ENCODE measurements at regions of chr14 and their contacts with region 1.

Region 1: DNA sequence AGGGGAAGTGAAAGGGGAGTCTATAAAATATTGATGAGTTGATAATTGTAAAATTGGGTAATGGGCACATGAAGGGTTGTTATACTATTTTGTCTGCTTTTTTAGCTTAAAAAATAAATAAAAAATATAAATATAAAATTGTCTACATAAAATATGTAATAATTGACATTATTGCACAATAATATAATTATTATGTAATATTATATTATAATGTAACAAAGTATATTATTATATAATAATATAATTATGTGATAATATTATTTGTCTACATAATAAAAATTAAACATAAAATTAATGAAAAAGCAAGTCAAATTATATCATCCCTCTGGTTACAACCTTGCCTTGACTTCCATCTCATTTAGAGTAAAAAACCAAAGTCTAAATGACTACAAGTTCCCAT is 367.8 kb upstream of the CCDC196 start:
- DNase-seq: no peak
- ATAC-seq: no peak
- H3K4me3 ChIP-seq: no peak overlapping the region
- H3K4me3 Mint-ChIP-seq: no peak overlapping the region
- H3K27ac ChIP-seq: no peak overlapping the region
- H3K27ac Mint-ChIP-seq: no peak overlapping the region
- H3K4me1 ChIP-seq: no peaks in the 10 kb centered on the region
- H3K4me1 Mint-ChIP-seq: no peaks in the 10 kb centered on the region
- H3K27me3 ChIP-seq: no peaks in the 10 kb centered on the region
- H3K27me3 Mint-ChIP-seq: peaks cover 0 to 15% of the 10 kb centered on the region in 2 donors

Region 2: GRCh38 chr14:65502676-65503124 is 615.7 kb before region 1 on chr14:
- CTCF ChIA-PET with region 1: no interaction called
- POLR2A ChIA-PET with region 1: no interaction called
- DNase-seq: no peak
- ATAC-seq: no peak
- H3K4me3 ChIP-seq: no peak overlapping the region
- H3K4me3 Mint-ChIP-seq: no peak overlapping the region
- H3K27ac ChIP-seq: no peak overlapping the region
- H3K27ac Mint-ChIP-seq: no peak overlapping the region
- H3K4me1 ChIP-seq: no peaks in the 10 kb centered on the region
- H3K4me1 Mint-ChIP-seq: peaks cover 37 to 46% (median 42%) of the 10 kb centered on the region in 3 donors
- H3K27me3 ChIP-seq: no peaks in the 10 kb centered on the region
- H3K27me3 Mint-ChIP-seq: no peaks in the 10 kb centered on the region

Region 3: DNA sequence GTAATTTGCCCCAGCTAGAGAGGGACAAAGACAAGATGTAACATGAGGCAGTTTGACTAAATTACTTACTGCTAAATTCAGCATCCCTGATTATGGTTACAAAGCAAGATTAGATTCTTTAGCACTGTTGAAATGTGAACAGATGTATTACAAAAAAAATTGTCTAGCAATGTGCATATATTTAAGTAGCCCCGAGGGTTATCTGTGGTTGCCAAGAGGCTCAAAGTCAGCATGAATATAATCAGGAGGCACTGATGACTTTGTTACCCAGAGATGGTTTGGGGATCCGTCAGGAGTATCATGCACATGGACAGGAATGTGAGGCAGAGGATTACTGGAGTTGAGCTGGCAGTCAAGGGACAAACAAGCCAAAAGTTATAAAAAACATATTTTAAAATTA is 10.8 kb after region 1 on chr14:
- CTCF ChIA-PET with region 1: no interaction called
- POLR2A ChIA-PET with region 1: no interaction called
- DNase-seq: no peak
- ATAC-seq: no peak
- H3K4me3 ChIP-seq: no peak overlapping the region
- H3K4me3 Mint-ChIP-seq: no peak overlapping the region
- H3K27ac ChIP-seq: no peak overlapping the region
- H3K27ac Mint-ChIP-seq: no peak overlapping the region
- H3K4me1 ChIP-seq: no peaks in the 10 kb centered on the region
- H3K4me1 Mint-ChIP-seq: no peaks in the 10 kb centered on the region
- H3K27me3 ChIP-seq: peaks cover 0 to 7% of the 10 kb centered on the region in 2 experiments
- H3K27me3 Mint-ChIP-seq: peaks cover 4 to 5% of the 10 kb centered on the region in 2 donors

Region 4: DNA sequence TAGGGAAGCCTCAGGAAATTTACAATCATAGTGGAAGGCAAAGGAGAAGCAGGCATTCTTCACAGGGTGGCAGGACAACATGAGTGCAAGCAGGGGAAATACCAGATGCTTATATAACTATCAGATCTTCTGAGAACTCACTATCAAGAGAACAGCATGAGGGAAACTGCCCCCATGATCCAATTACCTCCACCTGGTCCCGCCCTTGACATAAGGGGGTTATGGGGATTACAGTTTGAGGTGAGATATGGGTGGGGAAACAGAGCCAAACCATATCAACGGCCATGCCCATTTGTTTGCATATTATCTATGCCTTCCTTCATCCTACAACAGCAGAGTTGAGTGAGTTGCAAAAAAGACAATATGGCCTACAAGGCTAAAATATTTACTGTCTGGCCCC is 227.6 kb after region 1 on chr14:
- CTCF ChIA-PET with region 1: no interaction called
- POLR2A ChIA-PET with region 1: no interaction called
- DNase-seq: no peak
- ATAC-seq: no peak
- H3K4me3 ChIP-seq: no peak overlapping the region
- H3K4me3 Mint-ChIP-seq: no peak overlapping the region
- H3K27ac ChIP-seq: no peak overlapping the region
- H3K27ac Mint-ChIP-seq: no peak overlapping the region
- H3K4me1 ChIP-seq: no peaks in the 10 kb centered on the region
- H3K4me1 Mint-ChIP-seq: no peaks in the 10 kb centered on the region
- H3K27me3 ChIP-seq: no peaks in the 10 kb centered on the region
- H3K27me3 Mint-ChIP-seq: no peaks in the 10 kb centered on the region

Region 5: GRCh38 chr14:67446120-67447032 is 1328.0 kb after region 1 on chr14:
- CTCF ChIA-PET with region 1: interaction called in 1 of 2 experiments, 10 read pairs
- POLR2A ChIA-PET with region 1: no interaction called
- DNase-seq: no peak
- ATAC-seq: no peak
- H3K4me3 ChIP-seq: no peak overlapping the region
- H3K4me3 Mint-ChIP-seq: no peak overlapping the region
- H3K27ac ChIP-seq: no peak overlapping the region
- H3K27ac Mint-ChIP-seq: no peak overlapping the region
- H3K4me1 ChIP-seq: no peaks in the 10 kb centered on the region
- H3K4me1 Mint-ChIP-seq: no peaks in the 10 kb centered on the region
- H3K27me3 ChIP-seq: no peaks in the 10 kb centered on the region
- H3K27me3 Mint-ChIP-seq: peaks cover 8 to 24% of the 10 kb centered on the region in 2 donors